CD8-positive, alpha-beta memory T cell (primary cell): ENCODE measurements at regions of chr11 and their contacts with region 1.

Region 1: DNA sequence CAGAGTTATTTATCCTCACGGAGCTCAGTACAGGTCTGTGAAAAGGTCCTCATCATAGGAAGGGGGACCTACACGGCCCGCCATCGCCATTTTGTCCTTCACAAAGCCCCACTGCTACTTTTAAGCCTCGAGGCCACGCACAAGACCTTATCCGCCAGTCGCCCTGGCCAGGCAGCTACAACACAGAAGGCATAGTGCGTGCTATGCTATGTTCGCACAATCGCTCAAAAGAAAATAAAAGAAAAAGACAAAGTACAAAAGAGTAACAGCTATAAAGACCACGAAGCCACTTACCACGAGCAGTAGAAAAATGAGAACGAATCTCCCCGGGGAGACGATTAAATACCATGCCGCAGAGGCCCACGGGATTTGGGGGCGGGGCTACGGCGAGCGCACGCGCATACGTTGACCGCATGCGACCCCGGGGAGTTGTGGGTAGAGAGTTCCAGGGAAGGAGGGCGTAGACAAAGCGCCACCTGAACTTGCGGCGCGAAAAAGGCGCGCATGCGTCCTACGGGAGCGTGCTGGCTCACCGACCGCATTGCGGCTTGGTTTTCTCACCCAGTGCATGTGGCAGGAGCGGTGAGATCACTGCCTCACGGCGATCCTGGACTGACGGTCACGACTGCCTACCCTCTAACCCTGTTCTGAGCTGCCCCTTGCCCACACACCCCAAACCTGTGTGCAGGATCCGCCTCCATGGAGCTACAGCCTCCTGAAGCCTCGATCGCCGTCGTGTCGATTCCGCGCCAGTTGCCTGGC is 16.4 kb upstream of the WDR74 start:
- DNase-seq: peak; percentile 94 to 99 (median 98)
- H3K4me3 ChIP-seq: peak overlapping the region; percentile 98
- H3K4me3 Mint-ChIP-seq: peak overlapping the region; percentile 94 to 99 (median 98)
- H3K27ac ChIP-seq: peak overlapping the region; percentile 94
- H3K27ac Mint-ChIP-seq: peak overlapping the region; percentile 84 to 96 (median 94)
- H3K4me1 ChIP-seq: peaks cover 47% of the 10 kb centered on the region
- H3K4me1 Mint-ChIP-seq: peaks cover 46 to 63% (median 55%) of the 10 kb centered on the region in 3 donors
- H3K27me3 ChIP-seq: no peaks in the 10 kb centered on the region
- H3K27me3 Mint-ChIP-seq: peaks cover 0 to 6% of the 10 kb centered on the region in 2 donors

Region 2: DNA sequence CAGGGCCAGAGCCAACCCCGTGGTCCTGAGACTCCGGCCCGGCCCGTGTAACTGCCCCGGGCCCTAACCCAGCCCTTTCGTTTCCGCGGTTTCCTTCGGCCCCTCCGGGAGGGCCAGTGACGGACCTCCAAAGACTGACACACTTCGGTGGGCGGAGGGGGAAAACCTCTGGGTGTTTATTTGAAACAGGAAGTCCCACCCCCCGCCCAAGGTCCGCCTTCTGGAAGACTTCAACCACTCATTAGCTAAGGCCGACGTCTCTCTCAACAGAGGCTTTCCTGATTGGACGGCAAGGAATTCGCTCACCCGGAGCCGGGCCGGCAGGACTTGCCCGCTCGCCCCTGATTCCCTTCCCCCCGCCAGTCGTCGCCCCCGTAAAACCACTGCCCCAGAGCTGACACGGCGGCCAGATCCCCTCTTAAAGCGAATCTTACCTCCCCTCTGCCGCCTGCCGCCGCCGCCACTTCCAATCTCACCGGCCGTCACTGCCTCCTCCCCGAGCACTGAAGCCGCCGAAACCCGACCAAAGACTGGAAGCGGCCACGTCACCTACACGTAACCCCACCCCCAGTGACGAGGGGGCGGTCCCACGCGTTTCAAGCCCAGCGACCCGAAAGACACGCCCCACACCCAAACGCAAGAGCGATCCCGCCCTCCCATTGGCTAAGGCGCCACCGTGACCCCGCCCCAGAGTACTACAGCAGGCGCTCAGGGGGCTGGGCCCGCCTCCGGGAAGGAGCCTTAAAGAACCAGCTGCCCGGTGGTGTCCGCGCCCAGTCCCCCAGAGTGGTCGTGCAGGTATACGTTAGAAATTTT is 24.0 kb before region 1 on chr11 and contains the start of gene STX5:
- CTCF ChIA-PET with region 1: interaction called, 5 read pairs
- POLR2A ChIA-PET with region 1: interaction called, 43 read pairs
- DNase-seq: peak; percentile 99 to 100 (median 99)
- H3K4me3 ChIP-seq: peak within 1 kb of the TSS; percentile 96
- H3K4me3 Mint-ChIP-seq: peak within 1 kb of the TSS; percentile 93 to 100 (median 97)
- H3K27ac ChIP-seq: peak within 1 kb of the TSS; percentile 98
- H3K27ac Mint-ChIP-seq: peak within 1 kb of the TSS; percentile 96 to 100 (median 98)
- H3K4me1 ChIP-seq: peaks cover 29% of the 10 kb centered on the region
- H3K4me1 Mint-ChIP-seq: peaks cover 22 to 55% (median 35%) of the 10 kb centered on the region in 3 donors
- H3K27me3 ChIP-seq: no peaks in the 10 kb centered on the region
- H3K27me3 Mint-ChIP-seq: no peaks in the 10 kb centered on the region
- total RNA-seq, gene STX5: 34.7 to 35.3 TPM

Region 3: DNA sequence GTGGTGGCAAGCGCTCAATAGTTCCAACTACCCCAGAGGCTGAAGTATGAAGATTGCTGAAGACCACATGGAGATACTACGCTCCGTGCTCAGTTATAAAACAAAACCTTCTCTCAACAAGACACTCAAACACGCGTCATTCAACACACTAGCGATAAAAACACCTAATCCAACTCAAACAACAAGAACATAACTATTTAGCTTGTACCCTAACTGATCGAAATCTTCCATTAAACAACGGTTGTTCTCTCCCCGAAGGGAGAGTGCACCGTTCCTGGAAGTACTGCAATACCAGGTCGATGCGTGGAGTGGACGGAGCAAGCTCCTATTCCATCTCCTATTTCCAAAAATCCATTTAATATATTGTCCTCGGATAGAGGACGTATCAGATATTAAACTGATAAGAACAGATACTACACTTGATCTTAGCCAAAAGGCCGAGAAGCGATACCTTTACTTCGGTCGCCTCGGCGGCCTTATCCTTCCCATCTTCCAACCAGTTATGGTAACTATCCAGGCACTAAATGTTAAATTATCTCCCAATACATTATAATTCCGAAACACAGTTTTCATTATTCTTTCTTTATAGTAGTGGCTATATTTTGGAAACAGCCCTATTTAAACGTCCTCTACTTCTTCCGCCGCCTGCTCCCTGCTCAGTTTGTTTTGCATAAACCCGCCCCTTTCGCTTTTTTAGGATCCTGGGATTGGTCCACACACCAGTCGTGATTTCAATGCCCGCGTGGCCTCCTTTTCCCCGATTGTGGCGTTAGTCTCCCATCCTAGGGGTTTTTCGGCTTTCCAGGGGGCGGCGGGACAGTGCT is 14.2 kb before region 1 on chr11:
- CTCF ChIA-PET with region 1: interaction called, 26 read pairs
- POLR2A ChIA-PET with region 1: interaction called, 215 read pairs
- DNase-seq: peak; percentile 69 to 90 (median 88)
- H3K4me3 ChIP-seq: peak overlapping the region; percentile 67
- H3K4me3 Mint-ChIP-seq: no peak overlapping the region
- H3K27ac ChIP-seq: peak overlapping the region; percentile 98
- H3K27ac Mint-ChIP-seq: no peak overlapping the region
- H3K4me1 ChIP-seq: peaks cover 23% of the 10 kb centered on the region
- H3K4me1 Mint-ChIP-seq: peaks cover 22 to 28% (median 27%) of the 10 kb centered on the region in 3 donors
- H3K27me3 ChIP-seq: no peaks in the 10 kb centered on the region
- H3K27me3 Mint-ChIP-seq: peaks cover 0 to 1% of the 10 kb centered on the region in 2 donors

Region 4: GRCh38 chr11:62905927-62906531 is 50.3 kb after region 1 on chr11:
- CTCF ChIA-PET with region 1: no interaction called
- POLR2A ChIA-PET with region 1: no interaction called
- DNase-seq: peak; percentile 55 to 82 (median 68)
- H3K4me3 ChIP-seq: no peak overlapping the region
- H3K4me3 Mint-ChIP-seq: no peak overlapping the region
- H3K27ac ChIP-seq: no peak overlapping the region
- H3K27ac Mint-ChIP-seq: peak overlapping the region in 1 of 8 donors; percentile 14
- H3K4me1 ChIP-seq: no peaks in the 10 kb centered on the region
- H3K4me1 Mint-ChIP-seq: peaks cover 0 to 5% (median 4%) of the 10 kb centered on the region in 3 donors
- H3K27me3 ChIP-seq: no peaks in the 10 kb centered on the region
- H3K27me3 Mint-ChIP-seq: peaks cover 0 to 35% of the 10 kb centered on the region in 2 donors